Transverse colon (tissue), 4 donors: ENCODE measurements at regions of chr7 and their contacts with region 1.

Region 1: DNA sequence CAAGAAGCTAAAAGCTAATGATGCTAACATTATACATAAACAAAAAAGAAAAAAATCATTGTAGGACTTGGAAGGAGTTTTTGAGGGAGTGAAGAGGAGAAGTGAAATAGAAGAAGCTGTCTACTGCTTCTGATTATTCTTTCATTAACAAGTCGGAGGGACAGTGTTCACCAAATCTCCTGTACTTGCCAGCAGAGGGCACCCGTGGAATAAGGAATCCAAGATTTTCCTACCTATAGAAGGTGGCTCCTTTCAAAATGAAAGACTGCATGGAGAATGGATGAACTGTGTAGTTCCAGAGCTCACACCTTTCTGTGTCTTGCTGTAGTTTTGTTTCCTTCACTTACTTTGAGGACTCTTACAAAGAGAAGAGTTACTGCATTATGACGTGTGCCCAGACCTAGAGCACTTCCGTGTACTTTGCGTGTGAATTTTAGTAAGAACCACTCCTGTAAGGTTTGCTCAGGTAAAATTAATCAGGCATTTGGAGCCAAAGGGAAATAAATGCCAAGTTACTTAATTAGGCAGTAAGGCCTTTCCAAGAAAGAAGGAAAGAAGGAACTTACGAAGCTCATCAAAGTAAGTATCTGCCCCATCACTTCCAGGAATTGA is 145.1 kb downstream of the SEMA3D start:
- DNase-seq: peak; percentile 68
- H3K4me3 ChIP-seq: no peak overlapping the region
- H3K27ac ChIP-seq: no peak overlapping the region
- H3K4me1 ChIP-seq: no peaks in the 10 kb centered on the region
- H3K27me3 ChIP-seq: no peaks in the 10 kb centered on the region
- CTCF ChIP-seq: peak; percentile 51 to 62 (median 55)
- EP300 ChIP-seq: no peak
- POLR2A ChIP-seq: no peak

Region 2: DNA sequence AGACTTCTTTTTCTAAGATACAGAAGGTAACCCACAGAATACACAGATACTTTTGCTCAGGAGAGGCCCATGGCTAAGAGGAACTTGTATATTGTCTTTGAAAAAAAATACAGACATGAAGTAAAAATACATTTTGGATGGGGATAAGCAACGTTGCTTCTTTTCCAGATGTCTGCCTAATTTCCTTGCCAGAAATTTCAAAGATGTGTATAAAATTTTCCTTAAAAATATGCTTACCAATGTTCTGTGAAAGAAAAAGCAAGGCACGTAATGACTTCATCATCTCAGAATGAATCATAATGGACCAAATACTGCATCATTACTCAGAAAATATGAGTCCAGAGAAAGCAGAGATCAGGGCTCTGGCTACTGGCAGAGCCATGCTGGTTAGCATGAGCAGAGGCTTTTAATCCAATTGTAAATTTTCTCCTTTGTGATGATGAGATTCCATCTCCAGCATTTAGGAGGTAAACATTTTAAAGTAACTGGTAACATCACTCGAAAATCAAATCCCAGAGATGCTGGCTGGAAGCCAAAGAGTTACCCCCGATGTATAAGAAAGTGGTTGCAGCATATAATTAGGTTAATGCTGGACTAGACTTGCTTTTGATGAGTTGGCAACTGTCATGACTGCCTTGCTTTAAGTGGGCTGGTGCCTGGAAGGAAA is 1119.6 kb before region 1 on chr7:
- in situ Hi-C with region 1: no loop called
- intact Hi-C with region 1: no loop called
- DNase-seq: no peak
- H3K4me3 ChIP-seq: no peak overlapping the region
- H3K27ac ChIP-seq: no peak overlapping the region
- H3K4me1 ChIP-seq: no peaks in the 10 kb centered on the region
- H3K27me3 ChIP-seq: no peaks in the 10 kb centered on the region
- CTCF ChIP-seq: no peak
- EP300 ChIP-seq: no peak
- POLR2A ChIP-seq: no peak

Region 3: DNA sequence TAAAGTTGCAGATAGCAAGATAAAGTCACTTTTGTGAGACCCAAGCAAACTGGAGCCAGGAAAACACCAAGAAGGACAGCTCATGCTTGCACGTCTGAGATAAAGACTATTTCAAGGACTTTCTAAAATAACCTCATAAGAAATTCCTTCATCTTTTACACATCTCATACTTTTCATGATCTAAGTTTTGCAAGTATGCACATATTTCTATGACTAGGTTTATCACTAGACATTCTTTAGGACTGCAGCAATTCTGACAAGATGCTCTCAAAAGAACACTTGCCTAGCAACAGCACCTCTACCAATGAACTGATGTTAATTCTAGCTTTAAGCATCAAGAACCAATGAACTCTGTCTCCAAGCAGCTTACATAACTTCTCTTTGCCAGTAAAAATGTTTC is 312.4 kb before region 1 on chr7:
- in situ Hi-C with region 1: no loop called
- intact Hi-C with region 1: no loop called
- DNase-seq: no peak
- H3K4me3 ChIP-seq: no peak overlapping the region
- H3K27ac ChIP-seq: no peak overlapping the region
- H3K4me1 ChIP-seq: no peaks in the 10 kb centered on the region
- H3K27me3 ChIP-seq: no peaks in the 10 kb centered on the region
- CTCF ChIP-seq: no peak
- EP300 ChIP-seq: no peak
- POLR2A ChIP-seq: no peak

Region 4: GRCh38 chr7:84783141-84783778 is 258.5 kb before region 1 on chr7:
- in situ Hi-C with region 1: no loop called
- intact Hi-C with region 1: no loop called
- DNase-seq: no peak
- H3K4me3 ChIP-seq: no peak overlapping the region
- H3K27ac ChIP-seq: no peak overlapping the region
- H3K4me1 ChIP-seq: no peaks in the 10 kb centered on the region
- H3K27me3 ChIP-seq: no peaks in the 10 kb centered on the region
- CTCF ChIP-seq: no peak
- EP300 ChIP-seq: no peak
- POLR2A ChIP-seq: no peak

Region 5: DNA sequence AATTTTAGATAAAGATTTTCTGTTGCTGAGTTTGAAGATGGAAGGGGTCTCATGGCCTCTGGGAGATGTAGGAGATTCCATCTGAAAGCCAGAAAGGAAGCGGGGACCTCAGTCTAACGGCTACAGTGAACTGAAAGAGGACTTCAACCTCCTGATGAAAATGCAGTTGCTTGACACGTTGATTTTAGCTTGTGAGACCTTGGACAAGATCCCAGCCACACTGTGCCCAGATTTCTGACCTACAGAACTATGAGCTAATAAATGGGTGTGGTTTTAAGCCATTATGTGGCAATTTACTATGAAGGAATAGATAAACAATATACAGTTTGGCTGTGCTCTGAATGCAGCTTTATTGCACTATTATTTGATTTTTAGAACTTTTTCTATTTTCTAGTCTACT is 487.5 kb after region 1 on chr7:
- in situ Hi-C with region 1: loop called in 1 of 4 experiments (anchors 25 kb)
- intact Hi-C with region 1: no loop called
- DNase-seq: no peak
- H3K4me3 ChIP-seq: no peak overlapping the region
- H3K27ac ChIP-seq: no peak overlapping the region
- H3K4me1 ChIP-seq: no peaks in the 10 kb centered on the region
- H3K27me3 ChIP-seq: no peaks in the 10 kb centered on the region
- CTCF ChIP-seq: no peak
- EP300 ChIP-seq: no peak
- POLR2A ChIP-seq: no peak

Region 6: DNA sequence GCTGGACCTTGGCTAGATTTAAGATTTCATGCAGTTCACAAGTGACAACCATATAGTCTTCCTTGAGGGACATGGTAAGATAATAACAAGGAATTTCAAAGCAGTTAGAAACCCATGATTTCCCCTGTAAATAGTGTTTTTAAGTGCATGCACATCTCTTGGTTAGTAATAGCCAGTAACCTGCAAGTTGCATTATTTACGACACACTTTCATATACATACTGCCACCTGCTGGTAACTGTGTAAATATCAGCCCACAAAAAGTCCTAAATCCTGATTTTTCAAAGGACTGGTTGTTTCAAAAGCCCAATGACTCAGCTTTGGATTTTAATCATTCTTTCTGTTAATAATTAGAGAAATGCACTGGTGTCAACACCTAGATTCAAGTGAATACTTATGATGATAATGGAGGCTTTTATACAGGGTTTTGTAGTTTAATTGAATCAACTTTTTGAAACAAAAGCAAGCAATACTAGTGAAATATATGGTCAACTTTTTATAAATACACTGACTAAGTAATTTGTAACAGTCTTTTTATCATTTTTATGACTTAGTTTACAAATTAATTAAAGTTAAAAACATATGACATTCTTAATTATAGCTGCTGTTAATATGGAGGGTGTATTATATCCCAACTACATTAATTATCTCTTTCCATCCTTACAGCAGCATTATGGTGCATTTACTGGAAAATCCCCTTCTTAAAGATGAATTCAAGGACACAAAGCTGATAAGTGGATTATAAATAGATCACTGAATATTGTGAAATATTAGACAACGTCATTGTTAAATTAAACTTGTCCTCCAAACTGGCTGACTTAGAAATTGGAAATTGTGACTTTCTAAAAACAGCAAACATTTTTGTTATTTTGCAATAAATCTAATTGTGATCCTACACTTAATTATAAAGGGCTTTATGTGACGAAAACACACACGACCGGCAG is 512.8 kb after region 1 on chr7:
- in situ Hi-C with region 1: loop called in 1 of 4 experiments (anchors 25 kb)
- intact Hi-C with region 1: loop called (anchors 5 kb)
- DNase-seq: no peak
- H3K4me3 ChIP-seq: no peak overlapping the region
- H3K27ac ChIP-seq: no peak overlapping the region
- H3K4me1 ChIP-seq: no peaks in the 10 kb centered on the region
- H3K27me3 ChIP-seq: no peaks in the 10 kb centered on the region
- CTCF ChIP-seq: peak; percentile 51 to 64 (median 60)
- EP300 ChIP-seq: no peak
- POLR2A ChIP-seq: no peak

Region 7: GRCh38 chr7:85750454-85750949 is 708.8 kb after region 1 on chr7:
- in situ Hi-C with region 1: loop called in 1 of 4 experiments (anchors 25 kb)
- intact Hi-C with region 1: loop called (anchors 10 kb)
- DNase-seq: no peak
- H3K4me3 ChIP-seq: no peak overlapping the region
- H3K27ac ChIP-seq: no peak overlapping the region
- H3K4me1 ChIP-seq: peaks cover 0 to 8% (median 3%) of the 10 kb centered on the region in 4 donors
- H3K27me3 ChIP-seq: peaks cover 10% of the 10 kb centered on the region
- CTCF ChIP-seq: peak; percentile 16 to 51 (median 33)
- EP300 ChIP-seq: no peak
- POLR2A ChIP-seq: no peak